Activated CD4-positive, alpha-beta T cell treated with anti-CD3 and anti-CD28 coated beads, Interleukin-2, amount 10 ng/mL, durations not matched to agents 24 days and 14 days (primary cell): ENCODE measurements at regions of chr13 and their contacts with region 1.

Region 1: DNA sequence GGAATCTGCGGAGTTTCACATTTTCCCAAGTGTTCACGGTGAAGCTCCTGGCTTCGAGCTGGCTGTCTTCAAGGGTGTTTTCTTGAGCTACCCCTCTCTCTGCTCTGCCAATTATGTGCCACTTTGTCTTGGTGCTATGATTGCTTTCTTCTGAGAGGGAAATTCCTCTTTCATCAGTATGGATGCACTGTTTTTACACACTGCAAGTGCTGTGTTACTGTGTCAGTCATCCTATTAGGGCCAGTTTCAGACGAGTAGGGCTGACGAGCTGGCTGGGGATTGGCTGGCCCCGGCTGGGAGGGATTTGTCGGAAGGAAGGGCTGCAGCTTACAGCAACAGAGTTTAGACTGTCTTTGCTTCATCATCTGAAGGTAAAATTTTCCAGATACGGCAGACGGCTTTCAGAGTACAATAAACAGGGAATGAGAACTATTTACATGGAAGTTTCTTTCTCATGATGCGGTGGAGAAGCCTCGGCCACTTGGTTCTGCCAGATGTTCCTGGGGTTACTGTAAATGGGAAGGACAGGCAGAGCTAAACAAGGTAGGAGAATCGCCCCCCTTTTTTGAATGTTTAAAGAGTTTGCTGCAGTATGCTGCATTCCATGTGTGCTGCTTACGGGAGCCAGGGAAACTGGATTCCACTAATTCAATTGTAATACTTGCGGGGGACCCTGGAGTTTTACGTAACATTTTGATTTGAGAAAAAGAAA is at the start of gene MBNL2:
- DNase-seq: peak; percentile 95
- H3K4me3 Mint-ChIP-seq: peak within 1 kb of the TSS; percentile 91
- H3K27ac Mint-ChIP-seq: peak within 1 kb of the TSS; percentile 92
- H3K4me1 Mint-ChIP-seq: peaks cover 39% of the 10 kb centered on the region
- H3K27me3 Mint-ChIP-seq: no peaks in the 10 kb centered on the region
- total RNA-seq, gene MBNL2: 22.0 and 24.5 TPM in 2 replicates

Region 2: GRCh38 chr13:96089749-96090239 is 1132.4 kb before region 1 on chr13 and contains the start of gene HS6ST3:
- intact Hi-C with region 1: no loop called
- DNase-seq: no peak
- H3K4me3 Mint-ChIP-seq: no peak within 1 kb of the TSS
- H3K27ac Mint-ChIP-seq: no peak within 1 kb of the TSS
- H3K4me1 Mint-ChIP-seq: no peaks in the 10 kb centered on the region
- H3K27me3 Mint-ChIP-seq: peaks cover 50% of the 10 kb centered on the region
- total RNA-seq, gene HS6ST3: not detected in 2 replicates

Region 3: DNA sequence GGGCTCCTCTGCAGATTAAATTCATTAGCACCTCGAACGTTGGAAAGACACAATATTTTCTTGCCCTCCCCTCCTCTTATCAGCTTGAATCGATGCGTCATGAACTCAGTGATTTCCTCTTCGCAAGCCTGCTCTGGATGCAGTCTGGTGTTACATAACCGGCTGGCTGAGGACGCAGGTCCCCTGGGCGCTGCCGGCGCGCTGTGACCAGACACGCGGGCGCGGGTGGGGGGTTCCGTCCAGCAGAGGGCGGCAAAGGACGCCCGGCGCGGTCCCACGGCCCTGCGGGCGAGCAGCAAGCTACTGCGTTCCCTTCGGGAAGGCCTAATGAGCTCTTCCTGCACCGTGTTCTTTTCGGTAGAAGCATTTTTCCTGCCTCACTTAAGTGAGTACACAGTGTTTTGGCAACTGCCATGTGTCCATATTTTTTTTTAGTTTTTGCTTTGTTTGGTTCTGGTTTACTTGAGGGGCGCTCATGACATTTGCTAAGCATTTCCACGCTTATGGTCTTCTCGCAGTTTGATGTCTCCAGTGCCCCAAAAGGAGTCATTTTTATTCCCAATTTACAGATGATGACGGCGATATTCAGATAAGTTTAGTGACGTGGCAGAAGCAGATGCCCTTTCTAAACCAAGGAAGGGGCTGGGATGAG is 112.2 kb before region 1 on chr13:
- intact Hi-C with region 1: loop called (anchors 5 kb)
- DNase-seq: peak; percentile 94
- H3K4me3 Mint-ChIP-seq: peak overlapping the region; percentile 45
- H3K27ac Mint-ChIP-seq: no peak overlapping the region
- H3K4me1 Mint-ChIP-seq: peaks cover 6% of the 10 kb centered on the region
- H3K27me3 Mint-ChIP-seq: peaks cover 27% of the 10 kb centered on the region

Region 4: GRCh38 chr13:97257800-97258799 is 36.0 kb after region 1 on chr13:
- intact Hi-C with region 1: loop called (anchors 1 kb)
- DNase-seq: peak; percentile 67
- H3K4me3 Mint-ChIP-seq: peak overlapping the region; percentile 65
- H3K27ac Mint-ChIP-seq: peak overlapping the region; percentile 93
- H3K4me1 Mint-ChIP-seq: peaks cover 71% of the 10 kb centered on the region
- H3K27me3 Mint-ChIP-seq: no peaks in the 10 kb centered on the region

Region 5: DNA sequence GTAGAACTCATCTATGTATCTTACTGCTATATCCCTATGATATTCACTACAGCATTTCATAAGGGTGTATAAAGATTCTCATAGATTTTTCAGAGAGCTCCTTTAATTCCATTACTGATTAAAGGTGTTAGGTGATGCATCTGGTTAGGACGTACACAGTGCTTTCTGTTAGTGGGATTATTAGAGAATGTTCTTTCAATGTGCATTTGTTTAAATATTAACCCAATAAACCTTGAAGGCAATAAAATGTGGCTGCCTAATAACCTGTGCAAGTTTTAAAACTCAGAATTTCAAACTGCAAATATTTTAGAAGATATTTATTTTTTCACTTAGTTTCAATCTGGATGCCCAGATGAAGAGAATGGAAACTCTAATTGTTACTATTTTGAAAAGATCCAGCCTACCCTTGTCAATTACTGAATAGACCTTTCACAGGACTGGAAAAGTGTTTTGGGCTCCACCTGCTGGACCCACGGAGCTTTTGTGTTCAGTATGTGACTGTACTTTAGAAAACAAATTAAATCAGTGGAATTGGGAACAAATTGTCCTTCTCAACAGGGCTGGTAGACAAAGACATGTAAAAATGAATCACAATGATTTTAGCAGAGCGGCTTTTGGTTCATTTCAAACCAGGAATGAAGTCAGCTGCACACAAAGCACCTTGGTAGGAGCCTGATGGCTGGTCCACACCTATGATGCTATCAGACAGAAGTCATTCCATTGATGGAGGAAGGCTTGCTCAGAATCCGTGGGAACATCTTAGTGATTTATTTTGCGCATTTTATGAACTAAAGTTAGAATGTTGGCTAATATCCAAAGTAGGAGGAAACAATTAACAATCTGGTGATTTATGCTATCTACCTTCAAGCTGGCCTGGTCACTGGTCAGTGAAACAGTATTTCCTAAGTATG is 122.4 kb after region 1 on chr13:
- intact Hi-C with region 1: loop called (anchors 2 kb)
- DNase-seq: peak; percentile 81
- H3K4me3 Mint-ChIP-seq: no peak overlapping the region
- H3K27ac Mint-ChIP-seq: no peak overlapping the region
- H3K4me1 Mint-ChIP-seq: no peaks in the 10 kb centered on the region
- H3K27me3 Mint-ChIP-seq: no peaks in the 10 kb centered on the region

Region 6: GRCh38 chr13:97975848-97976609 is 753.9 kb after region 1 on chr13:
- intact Hi-C with region 1: loop called (anchors 10 kb)
- DNase-seq: peak; percentile 97
- H3K4me3 Mint-ChIP-seq: peak overlapping the region; percentile 92
- H3K27ac Mint-ChIP-seq: peak overlapping the region; percentile 99
- H3K4me1 Mint-ChIP-seq: peaks cover 24% of the 10 kb centered on the region
- H3K27me3 Mint-ChIP-seq: peaks cover 10% of the 10 kb centered on the region